ENCODE measurements at regions of chr1 and their contacts with region 1.

Region 1: GRCh38 chr1:20846461-20847374 is 59.6 kb upstream of the HP1BP3 start:
- H3K4me3 ChIP-seq: no peak overlapping the region
- H3K27ac ChIP-seq: no peak overlapping the region
- H3K4me1 ChIP-seq: no peaks in the 10 kb centered on the region
- CTCF ChIP-seq: no peak

Region 2: DNA sequence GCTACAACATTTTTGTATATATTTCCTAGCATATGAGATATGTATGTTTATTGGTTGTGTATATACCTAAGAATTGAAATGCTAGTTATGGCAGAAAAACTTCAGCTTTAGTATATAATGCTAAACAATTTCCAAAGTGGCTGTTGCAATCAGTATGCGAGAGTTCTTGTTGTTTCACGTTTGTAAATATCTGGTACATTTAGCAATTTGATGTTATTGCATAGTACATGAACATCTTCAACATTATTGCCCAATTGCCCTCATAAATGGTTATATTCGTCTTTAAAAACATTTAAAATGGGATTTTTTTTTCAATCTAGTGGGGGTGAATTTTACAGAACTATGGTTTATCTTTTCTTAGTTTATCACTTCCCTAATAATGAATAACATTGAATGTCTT is 26.6 kb after region 1 on chr1:
- CTCF ChIA-PET with region 1: no interaction called
- POLR2A ChIA-PET with region 1: interaction called, 10 read pairs
- H3K4me3 ChIP-seq: no peak overlapping the region
- H3K27ac ChIP-seq: no peak overlapping the region
- H3K4me1 ChIP-seq: no peaks in the 10 kb centered on the region
- CTCF ChIP-seq: no peak